Esophagus muscularis mucosa (tissue), 4 donors: ENCODE measurements at regions of chr19 and their contacts with region 1.

Region 1: GRCh38 chr19:44051654-44052402 is at the start of gene ZNF223:
- DNase-seq: peak; percentile 97
- H3K4me3 ChIP-seq: peak within 1 kb of the TSS; percentile 64 to 80 (median 72)
- H3K27ac ChIP-seq: peak within 1 kb of the TSS; percentile 70 to 77 (median 75)
- H3K4me1 ChIP-seq: peaks cover 14 to 21% (median 19%) of the 10 kb centered on the region in 4 donors
- H3K27me3 ChIP-seq: peaks cover 0 to 30% (median 0%) of the 10 kb centered on the region in 4 donors
- CTCF ChIP-seq: no peak
- EP300 ChIP-seq: peak; percentile 47
- POLR2A ChIP-seq: no peak
- total RNA-seq, gene ZNF223: 0.83 to 2.6 (median 2.5) TPM

Region 2: GRCh38 chr19:43784981-43785808 is 266.6 kb before region 1 on chr19:
- intact Hi-C with region 1: no loop called
- DNase-seq: no peak
- H3K4me3 ChIP-seq: peak overlapping the region in 2 of 4 donors; percentile 2 to 35
- H3K27ac ChIP-seq: peak overlapping the region in 2 of 4 donors; percentile 34 to 54
- H3K4me1 ChIP-seq: peaks cover 8 to 19% (median 15%) of the 10 kb centered on the region in 4 donors
- H3K27me3 ChIP-seq: peaks cover 0 to 52% (median 0%) of the 10 kb centered on the region in 4 donors
- CTCF ChIP-seq: peak; percentile 92 to 98 (median 94)
- EP300 ChIP-seq: no peak
- POLR2A ChIP-seq: no peak

Region 3: GRCh38 chr19:44002566-44003460 is 49.0 kb before region 1 on chr19 and contains the start of gene ZNF230:
- intact Hi-C with region 1: loop called (anchors 10 kb)
- DNase-seq: peak; percentile 96
- H3K4me3 ChIP-seq: peak within 1 kb of the TSS; percentile 65 to 79 (median 74)
- H3K27ac ChIP-seq: peak within 1 kb of the TSS; percentile 75 to 83 (median 80)
- H3K4me1 ChIP-seq: peaks cover 12 to 18% (median 14%) of the 10 kb centered on the region in 4 donors
- H3K27me3 ChIP-seq: no peaks in the 10 kb centered on the region
- CTCF ChIP-seq: peak in 1 of 3 experiments; percentile 18
- EP300 ChIP-seq: no peak
- POLR2A ChIP-seq: no peak
- total RNA-seq, gene ZNF230: 2.7 to 7.5 (median 3.5) TPM